Transverse colon (tissue), 4 donors: ENCODE measurements at regions of chr20 and their contacts with region 1.

Region 1: DNA sequence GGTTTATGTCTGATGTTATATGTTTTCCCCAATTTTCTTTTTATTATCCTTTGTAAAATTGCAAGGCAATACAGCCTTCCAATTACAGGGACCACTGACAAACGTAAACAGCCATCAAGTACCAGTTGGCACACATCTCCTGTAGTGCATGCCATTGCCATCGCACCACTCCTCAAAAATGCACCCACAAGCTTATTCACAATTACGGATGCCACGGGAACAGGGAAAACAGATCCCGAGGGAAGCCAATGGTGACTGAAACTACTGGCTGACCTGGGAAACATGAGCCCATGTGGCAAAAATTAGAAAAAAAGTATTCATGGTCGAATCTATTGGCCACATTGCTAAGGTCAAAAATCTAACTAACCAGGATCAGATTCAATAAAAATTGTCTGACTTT is 395.2 kb downstream of the PAX1 start:
- DNase-seq: no peak
- H3K4me3 ChIP-seq: no peak overlapping the region
- H3K27ac ChIP-seq: no peak overlapping the region
- H3K4me1 ChIP-seq: no peaks in the 10 kb centered on the region
- H3K27me3 ChIP-seq: no peaks in the 10 kb centered on the region
- CTCF ChIP-seq: no peak
- EP300 ChIP-seq: no peak
- POLR2A ChIP-seq: no peak

Region 2: DNA sequence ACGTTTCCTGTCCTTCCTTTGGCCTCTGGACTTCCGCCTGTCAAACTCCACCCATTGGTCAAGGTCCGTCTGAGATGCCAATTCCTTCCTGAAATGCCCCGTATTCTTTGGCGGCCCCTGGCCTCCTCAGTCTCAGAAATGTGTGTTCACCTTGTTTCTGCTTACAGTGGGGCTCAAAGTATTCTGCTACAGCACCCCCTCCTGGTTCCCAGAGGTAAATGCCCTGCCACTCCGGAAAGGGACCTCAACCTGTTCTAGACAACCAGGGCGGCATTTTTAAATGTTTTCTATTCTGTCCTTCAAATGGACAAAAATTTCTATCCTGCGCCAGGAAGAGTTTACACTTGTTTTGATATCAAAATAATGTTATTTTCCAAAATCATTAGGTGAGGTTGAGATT is 407.4 kb before region 1 on chr20:
- in situ Hi-C with region 1: no loop called
- intact Hi-C with region 1: no loop called
- DNase-seq: no peak
- H3K4me3 ChIP-seq: no peak overlapping the region
- H3K27ac ChIP-seq: no peak overlapping the region
- H3K4me1 ChIP-seq: no peaks in the 10 kb centered on the region
- H3K27me3 ChIP-seq: peaks cover 33% of the 10 kb centered on the region
- CTCF ChIP-seq: no peak
- EP300 ChIP-seq: no peak
- POLR2A ChIP-seq: no peak

Region 3: DNA sequence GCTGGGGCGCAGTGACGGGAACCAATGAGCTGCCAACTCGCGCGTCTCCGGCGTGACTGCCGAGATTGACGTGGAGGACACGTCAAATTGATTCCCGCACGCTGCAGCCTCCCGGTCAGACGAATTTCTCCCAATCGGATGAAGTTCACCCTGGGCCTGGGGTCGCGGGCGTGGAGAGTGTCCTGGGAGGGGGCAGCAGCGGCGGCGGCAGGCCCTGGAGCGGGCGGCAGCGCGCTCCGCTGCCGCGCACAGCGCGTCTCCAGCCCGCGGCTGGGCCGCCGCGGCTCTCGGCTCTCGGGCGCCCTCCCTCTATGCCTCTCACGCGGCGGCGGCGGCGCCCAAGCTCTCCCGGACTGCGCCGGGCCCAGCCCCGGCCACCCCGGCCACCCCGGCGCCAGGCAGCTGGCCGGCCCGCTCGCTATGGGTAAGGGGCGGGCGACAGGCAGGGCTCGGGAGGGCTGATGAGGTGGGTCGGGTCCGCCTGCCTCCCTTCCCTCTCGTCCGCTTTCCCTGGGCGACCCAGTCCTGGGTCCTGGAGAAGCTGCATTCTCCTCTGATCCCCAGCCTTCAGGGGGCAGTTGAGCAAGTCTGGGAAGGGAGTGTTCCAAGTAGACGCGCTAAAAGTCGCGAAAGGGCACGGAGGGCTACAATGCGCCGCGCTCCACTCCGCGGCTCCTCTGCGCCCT is 395.0 kb before region 1 on chr20 and contains the start of gene PAX1:
- in situ Hi-C with region 1: no loop called
- intact Hi-C with region 1: loop called (anchors 5 kb)
- DNase-seq: no peak
- H3K4me3 ChIP-seq: no peak within 1 kb of the TSS
- H3K27ac ChIP-seq: no peak within 1 kb of the TSS
- H3K4me1 ChIP-seq: peaks cover 0 to 9% (median 4%) of the 10 kb centered on the region in 4 donors
- H3K27me3 ChIP-seq: peaks cover 98% of the 10 kb centered on the region
- CTCF ChIP-seq: no peak
- EP300 ChIP-seq: no peak
- POLR2A ChIP-seq: no peak
- total RNA-seq, gene PAX1: not detected